AG04450 (cell line): ENCODE measurements at regions of chr9 and their contacts with region 1.

Region 1: GRCh38 chr9:109806506-109807115 is 26.6 kb downstream of the PALM2AKAP2 start:
- DNase-seq: no peak
- H3K4me3 ChIP-seq: no peak overlapping the region
- H3K27ac ChIP-seq: no peak overlapping the region
- H3K27me3 ChIP-seq: no peaks in the 10 kb centered on the region
- CTCF ChIP-seq: no peak

Region 2: DNA sequence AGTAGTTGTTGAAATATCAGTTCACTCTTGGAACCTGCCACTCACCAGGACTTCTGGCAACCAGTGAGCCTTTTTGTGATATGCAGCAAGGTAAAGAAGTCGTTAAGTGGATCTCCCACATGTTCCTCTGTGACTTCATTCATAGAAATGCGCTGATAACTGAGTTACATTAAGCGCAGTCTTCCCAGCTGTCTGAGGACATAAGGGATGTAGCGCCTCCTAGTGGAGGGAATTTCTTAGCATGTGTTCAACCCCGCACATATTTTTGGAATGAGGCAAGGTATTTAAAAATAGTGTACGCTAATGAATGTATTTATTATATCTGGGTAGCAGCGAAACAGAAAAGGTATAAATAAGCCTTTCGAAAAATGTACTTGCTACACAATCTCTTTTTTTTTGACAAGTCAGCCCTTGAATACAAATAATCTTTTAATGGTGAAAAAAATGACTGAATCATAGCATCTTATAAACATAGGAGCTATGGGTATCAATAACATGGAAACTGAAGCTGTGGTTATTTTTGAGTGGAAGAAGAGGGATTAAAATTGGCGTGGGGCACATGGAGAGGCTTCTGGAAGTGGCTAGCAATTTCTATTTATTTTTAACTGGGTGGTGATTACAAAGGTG is 11.3 kb after region 1 on chr9:
- CTCF ChIA-PET with region 1: interaction called, 21 read pairs
- POLR2A ChIA-PET with region 1: interaction called, 4 read pairs
- DNase-seq: peak; percentile 97
- H3K4me3 ChIP-seq: peak overlapping the region; percentile 15; the same call in 1 of the 2 replicates
- H3K27ac ChIP-seq: peak overlapping the region; percentile 77
- H3K27me3 ChIP-seq: no peaks in the 10 kb centered on the region
- CTCF ChIP-seq: peak; percentile 72

Region 3: GRCh38 chr9:109953813-109954497 is 147.3 kb after region 1 on chr9:
- CTCF ChIA-PET with region 1: no interaction called
- POLR2A ChIA-PET with region 1: no interaction called
- DNase-seq: no peak
- H3K4me3 ChIP-seq: no peak overlapping the region
- H3K27ac ChIP-seq: no peak overlapping the region
- H3K27me3 ChIP-seq: no peaks in the 10 kb centered on the region
- CTCF ChIP-seq: 0 out of 2 replicates have a peak, but pooled peaks have one; percentile 10